Psoas muscle (tissue), 8 donors: ENCODE measurements at regions of chr19 and their contacts with region 1.

Region 1: DNA sequence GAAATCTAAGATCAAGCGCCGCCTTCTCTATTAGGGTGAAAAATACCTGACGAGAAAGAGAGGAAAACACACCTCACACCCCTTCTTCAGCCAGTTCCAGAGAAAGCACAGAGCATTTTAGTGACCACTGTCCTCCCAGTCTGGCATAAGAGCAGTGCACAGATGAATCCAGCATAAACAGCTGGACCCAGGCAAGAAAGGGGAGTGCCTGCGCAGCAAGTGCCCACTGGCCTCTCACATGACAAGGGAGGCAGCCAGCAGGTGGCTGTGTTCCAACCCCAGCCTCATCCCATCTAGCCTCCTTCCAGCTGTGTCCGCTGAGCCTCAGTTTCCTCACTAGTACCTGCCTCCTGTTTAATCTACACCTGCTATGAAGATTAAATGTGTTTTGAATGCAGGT is 8.0 kb downstream of the MED26 start:
- DNase-seq: peak; percentile 40 to 63
- ATAC-seq: peak; percentile 58 to 75 (median 67)
- H3K4me3 ChIP-seq: no peak overlapping the region
- H3K27ac ChIP-seq: peak overlapping the region; percentile 58
- H3K4me1 ChIP-seq: peaks cover 73% of the 10 kb centered on the region
- H3K27me3 ChIP-seq: no peaks in the 10 kb centered on the region
- CTCF ChIP-seq: no peak

Region 2: DNA sequence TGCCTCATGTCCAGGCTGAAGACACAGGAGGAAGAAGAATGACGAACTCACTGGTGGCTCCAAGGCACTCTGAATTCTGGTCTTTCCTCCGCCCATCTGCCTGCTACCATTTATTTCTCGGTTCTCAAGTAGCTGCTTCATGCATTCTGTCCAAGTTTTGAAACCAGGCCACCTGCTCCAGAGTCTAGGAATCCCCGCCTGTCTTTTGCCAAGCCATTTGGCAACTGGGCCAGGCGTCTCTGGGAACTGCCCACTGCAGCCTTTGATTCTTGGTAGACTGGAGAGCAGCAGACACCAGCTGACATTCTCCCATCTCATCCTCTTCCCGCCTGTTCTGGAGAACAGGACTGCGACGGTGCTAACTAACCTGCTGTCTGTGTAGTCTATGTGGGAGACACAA is 58.6 kb before region 1 on chr19:
- intact Hi-C with region 1: no loop called
- DNase-seq: peak in 1 of 2 donors; percentile 80
- ATAC-seq: peak; percentile 85 to 95 (median 92)
- H3K4me3 ChIP-seq: no peak overlapping the region
- H3K27ac ChIP-seq: peak overlapping the region; percentile 74
- H3K4me1 ChIP-seq: peaks cover 16% of the 10 kb centered on the region
- H3K27me3 ChIP-seq: no peaks in the 10 kb centered on the region
- CTCF ChIP-seq: no peak

Region 3: DNA sequence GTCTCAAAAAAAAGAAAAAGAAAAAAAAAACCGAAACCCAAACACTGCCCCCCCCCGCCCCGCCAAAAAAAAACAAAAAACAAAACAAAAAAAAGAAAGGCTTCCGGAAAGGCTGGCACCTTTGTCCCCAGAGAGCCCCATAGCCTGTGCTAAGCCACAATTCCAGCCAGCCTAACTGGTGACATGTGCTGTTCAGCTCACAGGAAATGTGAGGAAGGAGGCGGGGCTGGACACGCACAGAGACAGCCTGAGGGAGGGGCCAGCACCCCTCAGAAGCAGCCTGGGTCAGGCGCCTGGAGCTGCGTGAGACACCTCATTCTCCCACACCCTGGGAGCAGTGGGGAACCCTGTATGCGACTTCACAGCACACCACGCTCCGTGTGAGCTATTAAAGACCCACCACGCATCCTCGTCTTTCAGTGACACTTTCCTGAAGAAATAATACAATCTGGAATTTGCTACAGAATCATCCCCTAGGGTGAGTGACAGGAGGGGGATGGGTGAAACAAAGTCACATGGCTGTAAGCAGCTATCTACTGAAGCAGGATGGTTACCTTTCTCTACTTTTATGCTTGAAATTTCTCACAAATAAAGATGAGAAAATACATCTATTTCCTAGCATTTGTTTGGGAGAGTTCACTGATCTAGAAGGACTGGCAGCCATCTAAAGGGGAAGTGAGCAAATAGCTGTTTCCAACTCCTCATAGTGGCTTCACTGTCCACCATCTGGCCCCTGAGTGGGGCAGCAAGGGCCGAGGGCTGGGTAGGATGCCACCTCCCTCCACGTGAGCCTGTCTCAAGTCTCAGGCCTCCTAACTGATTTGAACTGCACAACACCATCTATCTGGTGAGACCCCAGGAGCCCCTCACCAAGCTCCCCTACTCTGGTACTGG is 35.5 kb before region 1 on chr19:
- intact Hi-C with region 1: loop called (anchors 5 kb)
- DNase-seq: peak; percentile 81 to 91
- ATAC-seq: peak; percentile 61 to 67 (median 66)
- H3K4me3 ChIP-seq: peak overlapping the region; percentile 46
- H3K27ac ChIP-seq: peak overlapping the region; percentile 93
- H3K4me1 ChIP-seq: peaks cover 99% of the 10 kb centered on the region
- H3K27me3 ChIP-seq: no peaks in the 10 kb centered on the region
- CTCF ChIP-seq: no peak

Region 4: DNA sequence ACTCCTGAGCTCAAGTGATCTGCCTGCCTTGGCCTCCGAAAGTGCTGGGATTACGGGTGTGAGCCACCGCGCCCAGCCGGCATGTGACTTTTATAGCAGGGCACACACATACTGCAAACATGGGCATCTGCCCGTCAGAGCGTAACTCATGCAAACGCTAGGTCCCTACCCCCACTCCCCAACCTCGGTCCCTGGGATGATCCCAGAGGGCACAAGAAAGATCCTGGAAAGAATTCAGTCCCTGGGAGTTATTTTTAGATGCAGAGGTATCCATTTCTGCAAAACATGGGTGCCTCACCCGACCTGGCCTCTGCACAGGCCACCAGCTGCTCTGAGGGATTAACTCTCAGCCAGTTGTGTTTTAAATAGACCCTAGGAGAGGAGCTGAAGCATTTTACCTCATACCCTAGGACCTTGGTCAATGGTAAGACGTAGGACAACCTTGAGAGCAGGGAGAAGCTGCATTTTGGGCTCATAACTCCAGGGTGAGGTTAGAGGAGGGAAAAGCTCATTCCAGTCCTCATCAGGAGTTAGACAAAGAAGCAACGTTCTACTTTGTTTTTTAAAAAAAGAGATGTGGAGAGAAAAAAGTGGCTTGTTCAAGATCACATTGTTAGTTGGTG is 51.7 kb after region 1 on chr19:
- intact Hi-C with region 1: no loop called
- DNase-seq: peak; percentile 74 to 92
- ATAC-seq: peak; percentile 88 to 96 (median 94)
- H3K4me3 ChIP-seq: no peak overlapping the region
- H3K27ac ChIP-seq: peak overlapping the region; percentile 83
- H3K4me1 ChIP-seq: peaks cover 29% of the 10 kb centered on the region
- H3K27me3 ChIP-seq: no peaks in the 10 kb centered on the region
- CTCF ChIP-seq: no peak